A549 (cell line): ENCODE measurements at regions of chr10 and their contacts with region 1.

Region 1: DNA sequence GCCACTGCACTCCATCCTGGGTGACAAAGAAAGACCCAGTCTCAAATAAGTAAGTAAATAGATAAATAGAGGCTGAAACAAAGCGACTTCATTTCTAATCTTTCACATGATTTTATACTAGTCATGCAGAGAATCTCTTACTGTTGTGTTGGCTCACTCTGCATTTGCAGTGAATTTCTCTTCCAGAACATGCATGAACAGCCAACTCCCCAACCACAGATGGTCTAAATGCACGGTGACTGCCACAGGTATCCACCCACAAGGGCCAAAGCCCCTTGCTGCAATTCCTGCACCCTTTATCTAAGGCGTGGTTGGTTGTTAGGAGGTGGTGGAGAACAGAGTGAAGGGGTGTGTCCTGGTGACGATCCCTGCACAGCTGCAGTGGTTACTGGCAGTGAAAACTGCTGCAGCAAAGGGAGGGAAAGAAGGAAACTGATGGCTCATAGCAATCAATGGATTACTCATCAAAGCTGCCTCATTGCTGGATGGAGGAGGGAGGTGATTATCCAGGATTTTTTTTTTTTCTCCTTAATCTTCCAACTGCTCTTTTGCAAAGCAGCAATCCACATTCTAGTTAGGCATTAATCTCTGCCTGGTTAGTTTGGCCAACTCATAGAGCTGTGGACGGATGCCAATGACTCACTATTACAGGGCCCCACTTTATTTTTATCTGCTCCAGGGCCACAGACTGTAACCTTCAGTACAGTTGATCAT is 50.6 kb downstream of the PRTFDC1 start:
- DNase-seq: peak; percentile 86 to 88
- ATAC-seq: peak; percentile 94 to 95
- H3K4me3 ChIP-seq: peak overlapping the region; percentile 20; the same call in 2 of the 3 replicates
- H3K27ac ChIP-seq: peak overlapping the region; percentile 74 to 85
- H3K4me1 ChIP-seq: peaks cover 61% of the 10 kb centered on the region
- CTCF ChIP-seq: no peak
- EP300 ChIP-seq: peak; percentile 47 to 67; a peak in 2 of 5 replicates
- POLR2A ChIP-seq: no peak
- RAD21 ChIP-seq: peak; percentile 34 to 47; a peak in 4 of 5 replicates

Region 2: GRCh38 chr10:24952707-24953645 is 51.1 kb after region 1 on chr10:
- CTCF ChIA-PET with region 1: interaction called, 4 read pairs
- POLR2A ChIA-PET with region 1: interaction called, 15 read pairs
- DNase-seq: peak; percentile 44 to 57
- ATAC-seq: peak; percentile 73 to 74
- H3K4me3 ChIP-seq: peak overlapping the region; percentile 76
- H3K27ac ChIP-seq: peak overlapping the region; percentile 97 to 100
- H3K4me1 ChIP-seq: peaks cover 34% of the 10 kb centered on the region
- CTCF ChIP-seq: peak; percentile 44; the same call in 2 of the 3 replicates
- EP300 ChIP-seq: no peak
- POLR2A ChIP-seq: no peak; the same call in 1 of the 2 replicates
- RAD21 ChIP-seq: peak; percentile 4 to 44; a peak in 1 of 5 replicates